ENCODE measurements at regions of chr17 and their contacts with region 1.

Region 1: DNA sequence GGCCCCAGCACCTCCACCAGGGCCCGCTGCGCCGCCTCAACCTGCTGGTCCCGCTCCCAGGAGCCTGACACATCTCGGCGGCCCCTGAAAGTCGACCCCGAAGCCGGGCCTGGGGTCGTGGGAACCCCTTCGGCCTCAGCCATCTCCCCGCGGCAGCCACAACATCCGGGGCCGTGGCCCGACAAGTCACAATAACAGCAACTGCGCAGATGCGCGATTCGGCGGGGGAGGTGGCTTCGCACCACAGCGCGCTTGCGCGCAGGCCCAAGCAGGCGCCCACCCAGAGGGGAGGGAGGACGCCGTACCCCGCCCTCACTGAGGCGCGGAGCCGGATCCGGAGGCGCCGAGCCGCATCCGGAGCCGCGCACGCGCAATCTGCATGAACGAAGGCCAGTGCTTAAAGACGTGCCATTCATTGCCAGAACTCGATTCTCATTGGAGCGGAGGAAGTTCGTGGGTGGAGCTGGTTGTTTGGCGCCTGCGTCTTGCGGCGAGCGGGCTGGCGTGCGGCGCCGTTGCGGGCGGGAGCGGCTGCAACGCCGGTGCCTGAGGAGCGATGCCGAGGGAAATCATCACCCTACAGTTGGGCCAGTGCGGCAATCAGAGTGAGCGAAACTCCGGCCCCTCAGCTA is at the starts of genes RETREG3 and TUBG1:
- DNase-seq: peak; percentile 98
- ATAC-seq: peak; percentile 90
- H3K4me3 ChIP-seq: peak within 1 kb of the TSS; percentile 98
- H3K27ac ChIP-seq: peak within 1 kb of the TSS; percentile 90
- H3K4me1 ChIP-seq: no peaks in the 10 kb centered on the region; the same call in 1 of the 2 replicates
- H3K27me3 ChIP-seq: no peaks in the 10 kb centered on the region
- CTCF ChIP-seq: peak; percentile 16 to 24 (median 20); a peak in 2 of 6 replicates
- EP300 ChIP-seq: no peak
- POLR2A ChIP-seq: peak; percentile 91
- RAD21 ChIP-seq: no peak
- polyA plus RNA-seq, gene RETREG3: 7.0 to 9.0 TPM
- polyA plus RNA-seq, gene TUBG1: 40.0 to 40.3 TPM

Region 2: DNA sequence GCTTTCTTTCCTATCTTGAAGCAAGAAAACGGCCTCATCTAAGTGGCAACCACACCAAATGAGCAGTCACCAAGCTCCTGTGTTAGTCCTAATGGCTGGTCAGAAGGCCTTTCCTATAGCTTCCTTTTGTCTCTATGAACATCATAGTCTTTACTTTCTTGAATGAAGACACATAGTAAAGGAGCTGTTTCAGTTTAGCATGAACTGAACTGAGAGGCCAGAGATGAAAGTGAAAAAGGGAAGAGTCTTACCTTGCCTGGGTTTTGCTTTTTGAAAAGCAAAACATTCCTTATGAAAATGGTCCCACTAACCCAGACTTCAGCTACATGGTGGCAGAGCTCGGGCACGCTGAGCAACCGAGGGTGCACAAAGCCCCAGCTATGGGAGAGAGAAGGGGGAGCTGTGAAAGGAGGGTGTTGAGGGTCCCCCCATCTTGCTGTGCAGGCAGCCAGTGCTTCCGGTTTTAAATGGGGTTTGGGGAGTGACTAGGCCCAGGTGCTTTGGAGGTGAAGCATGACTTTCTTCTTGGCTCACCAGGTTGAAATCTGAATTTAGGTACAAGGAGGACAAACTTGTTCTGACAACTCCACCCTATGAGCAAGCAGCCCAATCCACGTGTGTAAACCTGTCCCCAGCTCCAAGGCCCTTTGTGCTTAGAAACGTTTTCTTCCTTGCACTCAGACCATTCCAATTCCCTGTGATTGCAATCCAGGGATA is 22.6 kb before region 1 on chr17:
- CTCF ChIA-PET with region 1: interaction called, 6 read pairs
- POLR2A ChIA-PET with region 1: interaction called, 18 read pairs
- RAD21 ChIA-PET with region 1: interaction called, 30 read pairs
- SMC1A ChIA-PET with region 1: interaction called, 69 read pairs
- in situ Hi-C with region 1: no loop called
- intact Hi-C with region 1: no loop called
- DNase-seq: no peak
- ATAC-seq: peak; percentile 94
- H3K4me3 ChIP-seq: peak overlapping the region; percentile 41; the same call in 1 of the 2 replicates
- H3K27ac ChIP-seq: peak overlapping the region; percentile 60
- H3K4me1 ChIP-seq: peaks cover 32% of the 10 kb centered on the region
- H3K27me3 ChIP-seq: no peaks in the 10 kb centered on the region
- CTCF ChIP-seq: no peak
- EP300 ChIP-seq: no peak
- POLR2A ChIP-seq: peak; percentile 39; the same call in 1 of the 2 replicates
- RAD21 ChIP-seq: no peak

Region 3: GRCh38 chr17:42598905-42599304 is 10.4 kb before region 1 on chr17:
- CTCF ChIA-PET with region 1: interaction called, 4 read pairs
- POLR2A ChIA-PET with region 1: interaction called, 6 read pairs
- RAD21 ChIA-PET with region 1: interaction called, 3 read pairs
- SMC1A ChIA-PET with region 1: interaction called, 13 read pairs
- in situ Hi-C with region 1: no loop called
- intact Hi-C with region 1: no loop called
- DNase-seq: no peak
- ATAC-seq: no peak
- H3K4me3 ChIP-seq: no peak overlapping the region
- H3K27ac ChIP-seq: no peak overlapping the region
- H3K4me1 ChIP-seq: peaks cover 8% of the 10 kb centered on the region
- H3K27me3 ChIP-seq: no peaks in the 10 kb centered on the region
- CTCF ChIP-seq: no peak
- EP300 ChIP-seq: no peak
- POLR2A ChIP-seq: no peak
- RAD21 ChIP-seq: no peak

Region 4: DNA sequence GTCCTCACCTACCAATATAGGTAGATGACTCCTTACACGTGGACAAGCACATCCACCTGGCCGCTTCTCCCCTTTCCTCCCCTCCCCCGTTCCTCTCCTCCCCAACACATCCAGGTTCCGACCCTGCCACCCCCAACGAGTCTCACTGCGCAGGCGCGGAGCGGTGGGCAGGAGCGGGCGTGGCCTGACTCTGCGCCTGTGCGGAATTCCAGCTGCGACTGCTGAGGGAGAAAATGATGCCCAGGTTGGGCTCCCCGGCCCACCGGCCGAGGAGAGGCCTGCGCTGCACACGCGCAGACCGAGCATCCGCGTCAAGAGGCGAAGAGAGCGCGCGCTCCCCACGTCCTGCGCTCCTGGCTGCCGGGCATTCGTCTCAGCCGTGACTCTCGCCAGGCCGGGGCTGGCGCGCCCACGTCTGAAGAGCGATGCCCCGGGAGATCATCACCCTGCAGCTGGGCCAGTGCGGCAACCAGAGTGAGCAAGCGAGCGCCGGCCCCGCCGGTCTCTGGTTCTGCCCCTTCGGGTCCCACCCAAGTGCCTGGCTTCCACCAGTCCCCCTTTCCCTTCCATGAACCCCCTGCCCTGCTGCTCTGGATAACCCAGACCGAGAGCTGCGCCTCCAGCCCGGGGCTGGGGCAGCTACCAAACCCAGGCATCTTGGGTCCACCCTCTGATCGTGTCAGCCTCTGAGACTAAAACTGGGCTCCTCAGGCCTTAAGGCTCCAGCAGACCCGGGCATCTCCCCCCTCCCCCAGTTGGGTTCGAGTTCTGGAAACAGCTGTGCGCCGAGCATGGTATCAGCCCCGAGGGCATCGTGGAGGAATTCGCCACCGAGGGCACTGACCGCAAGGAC is 50.0 kb after region 1 on chr17 and contains the start of gene TUBG2:
- CTCF ChIA-PET with region 1: interaction called, 7 read pairs
- POLR2A ChIA-PET with region 1: interaction called, 15 read pairs
- RAD21 ChIA-PET with region 1: interaction called, 4 read pairs
- SMC1A ChIA-PET with region 1: interaction called, 6 read pairs
- in situ Hi-C with region 1: no loop called
- intact Hi-C with region 1: no loop called
- DNase-seq: no peak
- ATAC-seq: peak; percentile 73
- H3K4me3 ChIP-seq: peak within 1 kb of the TSS; percentile 77
- H3K27ac ChIP-seq: peak within 1 kb of the TSS; percentile 42; the same call in 1 of the 2 replicates
- H3K4me1 ChIP-seq: peaks cover 33% of the 10 kb centered on the region
- H3K27me3 ChIP-seq: no peaks in the 10 kb centered on the region
- CTCF ChIP-seq: no peak
- EP300 ChIP-seq: no peak
- POLR2A ChIP-seq: peak; percentile 73
- RAD21 ChIP-seq: no peak
- polyA plus RNA-seq, gene TUBG2: 1.2 to 1.8 TPM

Region 5: DNA sequence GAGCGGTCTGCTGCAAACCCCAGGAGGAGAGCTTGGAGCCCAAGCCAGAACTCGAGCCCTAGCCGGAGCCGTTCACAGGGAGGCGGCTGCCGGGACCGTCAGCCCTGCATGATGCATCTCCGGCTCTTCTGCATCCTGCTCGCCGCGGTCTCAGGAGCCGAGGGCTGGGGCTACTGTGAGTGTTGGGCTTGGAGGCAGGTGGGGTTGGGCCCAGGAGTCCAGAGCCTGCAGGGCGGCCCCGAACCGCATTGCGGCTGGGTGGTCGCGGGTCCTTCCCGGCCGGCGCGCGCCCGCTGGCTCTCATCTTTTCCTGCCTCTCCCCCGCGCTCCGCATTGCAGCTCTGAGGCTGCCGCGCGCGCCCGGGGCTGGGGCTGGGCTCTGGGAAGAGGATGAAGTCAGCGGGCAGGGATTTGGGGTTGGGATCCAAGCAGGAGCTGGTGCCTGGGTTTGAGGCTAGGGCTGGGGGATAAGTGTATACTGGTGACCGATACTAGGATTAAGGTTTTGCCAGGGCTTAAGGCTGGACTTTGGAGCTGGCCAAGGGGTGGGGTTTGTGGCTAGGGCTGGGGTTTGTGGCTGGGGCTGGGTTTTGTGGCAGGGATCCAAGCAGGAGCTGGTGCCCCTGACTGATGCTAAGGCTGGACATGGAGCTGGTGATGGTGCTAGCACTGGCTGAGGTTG is 73.6 kb after region 1 on chr17:
- CTCF ChIA-PET with region 1: interaction called, 28 read pairs
- POLR2A ChIA-PET with region 1: interaction called, 70 read pairs
- RAD21 ChIA-PET with region 1: interaction called, 43 read pairs
- SMC1A ChIA-PET with region 1: interaction called, 85 read pairs
- in situ Hi-C with region 1: no loop called
- intact Hi-C with region 1: no loop called
- DNase-seq: no peak
- ATAC-seq: peak; percentile 6
- H3K4me3 ChIP-seq: peak overlapping the region; percentile 92
- H3K27ac ChIP-seq: peak overlapping the region; percentile 83
- H3K4me1 ChIP-seq: peaks cover 16% of the 10 kb centered on the region
- H3K27me3 ChIP-seq: no peaks in the 10 kb centered on the region
- CTCF ChIP-seq: no peak
- EP300 ChIP-seq: no peak
- POLR2A ChIP-seq: no peak
- RAD21 ChIP-seq: no peak

Region 6: DNA sequence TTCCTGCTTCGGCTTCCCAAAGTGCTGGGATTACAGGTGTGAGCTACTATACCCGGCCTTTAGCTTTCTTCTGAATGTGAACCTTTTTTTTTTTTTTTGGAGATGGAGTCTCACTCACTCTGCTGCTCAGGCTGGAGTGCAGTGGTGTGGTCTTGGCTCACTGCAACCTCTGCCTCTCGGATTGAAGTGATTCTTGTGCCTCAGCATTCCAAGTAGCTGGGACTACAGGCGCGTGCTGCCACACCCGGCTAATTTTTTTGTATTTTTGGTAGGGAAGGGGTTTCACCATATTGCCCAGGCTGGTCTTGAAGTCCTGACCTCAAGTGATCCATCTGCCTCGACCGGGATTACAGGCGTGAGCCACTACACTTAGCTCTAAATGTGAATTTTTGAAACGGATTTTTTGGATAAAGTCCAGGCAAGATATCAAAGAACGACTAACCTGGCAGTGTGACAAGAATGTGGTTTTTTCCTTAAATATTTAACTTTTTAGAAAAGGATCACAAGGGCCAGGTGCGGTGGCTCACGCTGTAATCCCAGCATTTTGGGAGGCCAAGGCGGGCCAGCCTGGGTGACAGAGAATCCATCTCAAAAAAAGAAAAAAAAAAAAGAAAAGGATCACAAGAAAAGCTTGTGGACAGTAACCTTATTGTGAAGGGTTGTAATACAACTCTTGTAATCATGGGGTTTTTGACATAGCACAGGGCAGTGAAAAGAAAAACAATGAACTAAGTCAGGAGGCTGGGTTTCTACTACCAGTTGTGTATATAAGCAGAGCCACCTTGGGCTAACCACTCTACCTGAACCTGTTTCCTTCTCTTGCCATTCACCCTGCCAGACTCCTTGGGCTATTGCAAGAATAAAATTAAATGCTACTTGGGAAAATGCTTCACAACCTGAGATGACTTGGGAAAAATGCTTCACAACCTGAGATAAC is 509.6 kb after region 1 on chr17:
- CTCF ChIA-PET with region 1: no interaction called
- POLR2A ChIA-PET with region 1: no interaction called
- RAD21 ChIA-PET with region 1: no interaction called
- SMC1A ChIA-PET with region 1: no interaction called
- in situ Hi-C with region 1: no loop called
- intact Hi-C with region 1: no loop called
- DNase-seq: no peak
- ATAC-seq: no peak
- H3K4me3 ChIP-seq: no peak overlapping the region
- H3K27ac ChIP-seq: no peak overlapping the region
- H3K4me1 ChIP-seq: no peaks in the 10 kb centered on the region
- H3K27me3 ChIP-seq: no peaks in the 10 kb centered on the region
- CTCF ChIP-seq: no peak
- EP300 ChIP-seq: no peak
- POLR2A ChIP-seq: no peak
- RAD21 ChIP-seq: no peak

Measured in GM12878 (cell line).